ENCODE measurements at regions of chr21 and their contacts with region 1.

Region 1: GRCh38 chr21:30268608-30269240 is 14.0 kb downstream of the KRTAP24-1 start:
- DNase-seq: no peak
- ATAC-seq: no peak
- H3K4me3 ChIP-seq: no peak overlapping the region
- H3K27ac ChIP-seq: no peak overlapping the region
- H3K4me1 ChIP-seq: no peaks in the 10 kb centered on the region
- H3K27me3 ChIP-seq: no peaks in the 10 kb centered on the region
- CTCF ChIP-seq: peak in 2 of 9 donors; percentile 7 to 16

Region 2: DNA sequence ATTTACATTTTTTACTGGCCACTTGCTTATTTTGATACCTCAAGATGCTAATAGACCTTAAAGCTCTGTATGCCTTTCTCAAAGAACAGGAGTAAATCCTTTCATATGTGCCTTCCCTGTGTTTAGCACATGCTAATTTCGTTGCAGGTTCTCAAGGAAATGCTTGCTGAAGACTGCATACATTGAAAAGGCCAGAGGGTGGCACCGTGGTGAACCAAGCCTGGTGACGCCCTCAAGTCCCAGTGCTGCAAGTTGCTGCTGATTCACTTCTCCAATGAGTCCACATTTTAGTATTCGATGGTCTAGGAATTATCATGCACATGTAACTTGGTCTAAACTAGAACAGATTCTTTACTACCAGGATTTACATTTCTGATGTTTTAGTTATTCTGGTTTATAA is 196.2 kb before region 1 on chr21:
- intact Hi-C with region 1: loop called in 1 of 10 experiments (anchors 10 kb)
- DNase-seq: peak in 1 of 2 donors; percentile 8
- ATAC-seq: no peak
- H3K4me3 ChIP-seq: no peak overlapping the region
- H3K27ac ChIP-seq: no peak overlapping the region
- H3K4me1 ChIP-seq: no peaks in the 10 kb centered on the region
- H3K27me3 ChIP-seq: peaks cover 0 to 7% (median 0%) of the 10 kb centered on the region in 7 donors
- CTCF ChIP-seq: peak in 4 of 9 donors; percentile 15 to 49 (median 34)

Measured in heart right ventricle (tissue), 16 donors.